ENCODE measurements at regions of chr1 and their contacts with region 1.

Region 1: DNA sequence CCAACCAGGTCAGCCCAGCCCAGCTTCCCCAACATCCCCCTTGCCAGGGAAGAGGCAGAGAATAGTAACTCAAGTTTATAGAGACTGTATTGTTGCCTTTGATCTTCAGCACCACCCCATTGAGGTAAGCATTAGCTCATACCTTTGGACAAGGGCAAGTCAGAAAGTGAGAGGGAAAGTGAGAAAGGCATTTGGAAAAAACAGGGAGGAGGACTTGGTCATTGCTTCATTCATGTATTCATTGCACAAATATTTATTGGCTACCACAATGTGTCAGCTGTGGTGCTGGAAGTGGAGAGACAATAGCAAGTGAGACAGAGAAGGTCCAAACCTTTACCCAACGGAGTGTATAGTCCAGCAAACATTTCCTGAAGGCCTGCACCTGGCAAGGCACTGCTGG is 561.2 kb downstream of the KIF26B start:
- DNase-seq: peak; percentile 95
- H3K4me3 Mint-ChIP-seq: no peak overlapping the region
- H3K27ac Mint-ChIP-seq: peak overlapping the region; percentile 77
- H3K4me1 Mint-ChIP-seq: peaks cover 30% of the 10 kb centered on the region
- H3K27me3 Mint-ChIP-seq: no peaks in the 10 kb centered on the region
- CTCF ChIP-seq: no peak

Region 2: DNA sequence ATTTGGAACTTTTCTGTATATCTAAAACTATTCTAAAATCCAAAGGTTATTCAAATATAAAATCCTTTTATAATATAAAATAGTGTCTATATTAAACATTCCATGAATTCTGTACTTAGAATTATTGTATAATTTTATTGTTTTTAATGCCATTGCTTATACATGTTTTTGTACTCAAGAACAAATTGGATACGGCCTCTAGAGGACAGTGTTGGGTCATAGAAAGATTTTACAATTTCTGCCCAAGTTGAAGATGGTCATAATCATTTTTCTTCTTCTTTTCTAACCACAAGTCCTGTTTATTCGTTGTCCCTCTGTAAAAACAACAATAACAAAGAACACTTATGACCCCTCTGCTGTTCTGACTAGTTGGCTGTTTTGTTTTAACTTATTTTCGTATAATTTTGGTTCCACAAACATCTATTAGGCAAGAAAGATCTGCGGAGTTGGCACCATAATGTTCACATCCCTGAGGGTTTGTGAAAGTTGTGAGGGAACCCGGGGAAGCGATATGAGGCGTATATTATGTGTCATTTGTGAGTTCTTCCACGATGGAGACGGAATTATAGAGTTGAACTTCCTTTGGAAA is 636.9 kb before region 1 on chr1:
- CTCF ChIA-PET with region 1: no interaction called
- POLR2A ChIA-PET with region 1: no interaction called
- intact Hi-C with region 1: loop called (anchors 10 kb)
- DNase-seq: peak; percentile 73
- H3K4me3 Mint-ChIP-seq: no peak overlapping the region
- H3K27ac Mint-ChIP-seq: no peak overlapping the region
- H3K4me1 Mint-ChIP-seq: peaks cover 4% of the 10 kb centered on the region
- H3K27me3 Mint-ChIP-seq: no peaks in the 10 kb centered on the region
- CTCF ChIP-seq: peak; percentile 97

Region 3: GRCh38 chr1:245512980-245513578 is 202.9 kb before region 1 on chr1:
- CTCF ChIA-PET with region 1: no interaction called
- POLR2A ChIA-PET with region 1: no interaction called
- intact Hi-C with region 1: loop called (anchors 5 kb)
- DNase-seq: no peak
- H3K4me3 Mint-ChIP-seq: no peak overlapping the region
- H3K27ac Mint-ChIP-seq: no peak overlapping the region
- H3K4me1 Mint-ChIP-seq: peaks cover 9% of the 10 kb centered on the region
- H3K27me3 Mint-ChIP-seq: peaks cover 67% of the 10 kb centered on the region
- CTCF ChIP-seq: peak; percentile 6

Region 4: DNA sequence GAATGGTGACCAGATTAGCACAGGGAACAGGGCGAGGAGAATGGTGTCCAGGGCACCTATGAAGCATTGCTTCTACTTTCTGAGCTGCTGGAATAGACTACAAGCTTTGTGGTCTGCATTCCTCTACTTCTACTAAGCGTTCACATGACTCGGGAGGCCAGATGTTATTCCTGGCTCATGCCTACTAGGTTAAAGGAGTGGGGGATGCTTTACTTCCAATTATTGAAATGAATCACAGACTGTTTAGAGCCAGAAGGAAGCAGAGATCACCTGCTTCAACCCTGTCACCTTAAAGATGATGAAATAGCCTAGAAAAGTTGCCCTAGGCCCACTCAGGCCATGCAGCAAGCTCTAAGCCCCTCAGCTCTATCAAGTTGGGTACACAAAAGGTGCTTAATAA is 72.3 kb after region 1 on chr1:
- CTCF ChIA-PET with region 1: interaction called, 3 read pairs
- POLR2A ChIA-PET with region 1: interaction called, 3 read pairs
- intact Hi-C with region 1: loop called (anchors 5 kb)
- DNase-seq: peak; percentile 87
- H3K4me3 Mint-ChIP-seq: no peak overlapping the region
- H3K27ac Mint-ChIP-seq: peak overlapping the region; percentile 78
- H3K4me1 Mint-ChIP-seq: peaks cover 20% of the 10 kb centered on the region
- H3K27me3 Mint-ChIP-seq: no peaks in the 10 kb centered on the region
- CTCF ChIP-seq: no peak

Region 5: DNA sequence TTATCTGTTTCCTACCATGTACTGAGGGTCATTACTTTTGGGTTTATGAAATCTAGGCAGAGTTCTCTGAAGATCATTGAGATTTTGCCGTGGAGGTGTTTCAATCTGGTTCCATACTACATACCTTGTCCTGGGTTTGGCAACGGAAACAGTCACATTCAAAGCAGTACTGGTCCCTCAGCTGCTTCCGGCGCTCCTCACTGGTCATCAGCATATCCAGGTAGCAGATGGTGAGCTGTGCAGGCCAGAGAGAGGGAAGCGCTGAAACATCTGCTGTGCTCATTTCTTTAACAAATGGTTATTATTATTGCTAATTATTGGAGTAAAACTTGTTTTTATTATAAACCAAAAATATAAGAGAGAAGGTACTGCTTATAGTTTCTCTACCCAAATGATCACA is 199.4 kb after region 1 on chr1:
- CTCF ChIA-PET with region 1: no interaction called
- POLR2A ChIA-PET with region 1: no interaction called
- intact Hi-C with region 1: no loop called
- DNase-seq: no peak
- H3K4me3 Mint-ChIP-seq: no peak overlapping the region
- H3K27ac Mint-ChIP-seq: no peak overlapping the region
- H3K4me1 Mint-ChIP-seq: no peaks in the 10 kb centered on the region
- H3K27me3 Mint-ChIP-seq: no peaks in the 10 kb centered on the region
- CTCF ChIP-seq: no peak

Region 6: DNA sequence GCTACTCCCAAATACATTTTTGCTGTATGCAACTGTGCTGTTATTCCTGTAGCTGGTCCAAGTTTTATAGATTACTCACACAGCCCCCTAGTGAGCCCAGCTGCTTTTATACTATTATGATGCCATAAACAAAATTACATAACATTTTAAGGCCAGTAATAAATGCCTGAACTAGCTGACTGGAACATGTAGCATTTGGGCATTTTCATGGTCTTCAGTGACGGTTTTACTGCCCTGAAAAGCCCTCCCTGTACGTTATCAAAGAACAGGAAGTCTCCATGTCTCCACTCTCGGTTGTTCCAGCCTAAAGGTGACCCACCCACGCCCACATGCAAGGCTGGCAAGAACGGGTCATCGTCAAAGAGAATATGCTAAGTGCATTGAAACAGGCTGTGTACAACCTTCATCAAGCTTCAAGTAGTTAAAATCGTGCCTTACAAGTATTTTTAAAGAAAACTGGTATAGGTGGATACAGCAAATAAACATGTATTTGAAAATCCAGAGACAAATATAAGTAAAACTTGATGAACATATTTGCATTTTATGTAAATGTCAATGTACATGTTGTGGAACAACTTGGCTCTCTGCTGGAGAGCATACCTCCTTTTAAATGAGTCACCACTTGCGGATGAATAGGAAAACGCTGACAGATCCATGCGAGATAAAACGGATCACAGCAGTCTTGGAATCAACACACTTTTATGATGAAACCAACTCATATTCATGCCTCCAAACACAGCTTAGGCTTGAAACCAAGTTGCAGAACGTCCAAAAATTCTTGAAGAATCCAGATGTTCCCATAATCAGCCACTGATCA is 270.6 kb after region 1 on chr1:
- CTCF ChIA-PET with region 1: no interaction called
- POLR2A ChIA-PET with region 1: no interaction called
- intact Hi-C with region 1: loop called (anchors 5 kb)
- DNase-seq: peak; percentile 93
- H3K4me3 Mint-ChIP-seq: peak overlapping the region; percentile 12
- H3K27ac Mint-ChIP-seq: peak overlapping the region; percentile 4
- H3K4me1 Mint-ChIP-seq: peaks cover 21% of the 10 kb centered on the region
- H3K27me3 Mint-ChIP-seq: no peaks in the 10 kb centered on the region
- CTCF ChIP-seq: no peak

Region 7: GRCh38 chr1:246226041-246226440 is 510.1 kb after region 1 on chr1:
- CTCF ChIA-PET with region 1: no interaction called
- POLR2A ChIA-PET with region 1: no interaction called
- intact Hi-C with region 1: no loop called
- DNase-seq: no peak
- H3K4me3 Mint-ChIP-seq: no peak overlapping the region
- H3K27ac Mint-ChIP-seq: no peak overlapping the region
- H3K4me1 Mint-ChIP-seq: no peaks in the 10 kb centered on the region
- H3K27me3 Mint-ChIP-seq: no peaks in the 10 kb centered on the region
- CTCF ChIP-seq: no peak